Lower leg skin (tissue), 4 donors: ENCODE measurements at regions of chr4 and their contacts with region 1.

Region 1: DNA sequence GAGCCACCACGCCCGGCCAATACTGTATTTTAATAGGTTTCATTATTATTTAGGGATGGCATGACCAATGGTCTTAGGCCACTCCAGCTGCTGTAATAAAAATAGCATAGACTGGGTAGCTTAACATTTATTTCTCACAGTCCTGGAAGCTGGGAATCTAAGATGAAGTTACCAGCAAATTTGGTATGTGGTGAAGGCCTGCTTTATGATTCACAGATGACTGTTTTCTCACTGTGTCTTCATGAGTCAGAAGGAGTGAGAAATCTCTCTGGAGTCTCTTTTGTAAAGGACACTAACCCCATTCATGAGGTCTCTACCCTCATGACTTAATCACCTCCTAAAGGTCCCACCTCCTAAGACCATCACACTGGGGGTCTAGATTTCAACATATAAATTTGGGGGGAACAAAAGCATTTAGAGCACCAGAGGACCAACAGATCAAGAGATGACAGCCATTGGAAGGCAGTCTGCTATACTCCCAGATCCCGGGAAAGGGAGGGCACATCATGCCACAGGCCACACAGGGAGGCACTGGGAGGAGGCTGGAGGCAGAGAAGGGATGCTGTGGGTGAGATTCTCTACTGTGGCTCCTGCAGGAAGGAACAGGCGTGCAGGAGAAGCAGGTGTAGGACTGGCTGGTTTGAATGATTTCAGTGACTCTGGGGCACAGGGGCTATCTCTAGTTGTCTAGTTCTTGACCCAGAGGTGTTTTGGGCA is 335.8 kb upstream of the SFRP2 start:
- DNase-seq: no peak
- H3K4me3 ChIP-seq: no peak overlapping the region
- CTCF ChIP-seq: no peak
- POLR2A ChIP-seq: no peak

Region 2: DNA sequence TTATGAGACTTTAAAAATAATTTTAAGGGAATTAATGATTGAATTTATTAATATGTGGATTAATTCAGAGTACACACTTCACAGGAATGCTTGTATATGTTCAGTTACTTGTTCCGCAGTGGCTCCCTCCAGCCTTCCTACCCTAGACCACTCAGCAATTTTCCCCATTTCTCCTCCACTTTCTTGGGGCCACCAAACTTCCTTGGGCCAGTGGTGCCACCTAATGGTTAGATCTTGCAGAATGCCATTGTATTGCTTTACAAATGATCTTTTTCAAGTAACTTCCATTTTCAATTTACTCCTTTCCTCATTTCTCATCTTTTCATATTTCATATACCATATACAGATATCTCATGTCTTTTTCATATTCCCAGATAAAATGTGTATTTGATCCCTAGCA is 361.3 kb before region 1 on chr4:
- intact Hi-C with region 1: no loop called
- DNase-seq: no peak
- H3K4me3 ChIP-seq: no peak overlapping the region
- CTCF ChIP-seq: no peak
- POLR2A ChIP-seq: no peak

Region 3: DNA sequence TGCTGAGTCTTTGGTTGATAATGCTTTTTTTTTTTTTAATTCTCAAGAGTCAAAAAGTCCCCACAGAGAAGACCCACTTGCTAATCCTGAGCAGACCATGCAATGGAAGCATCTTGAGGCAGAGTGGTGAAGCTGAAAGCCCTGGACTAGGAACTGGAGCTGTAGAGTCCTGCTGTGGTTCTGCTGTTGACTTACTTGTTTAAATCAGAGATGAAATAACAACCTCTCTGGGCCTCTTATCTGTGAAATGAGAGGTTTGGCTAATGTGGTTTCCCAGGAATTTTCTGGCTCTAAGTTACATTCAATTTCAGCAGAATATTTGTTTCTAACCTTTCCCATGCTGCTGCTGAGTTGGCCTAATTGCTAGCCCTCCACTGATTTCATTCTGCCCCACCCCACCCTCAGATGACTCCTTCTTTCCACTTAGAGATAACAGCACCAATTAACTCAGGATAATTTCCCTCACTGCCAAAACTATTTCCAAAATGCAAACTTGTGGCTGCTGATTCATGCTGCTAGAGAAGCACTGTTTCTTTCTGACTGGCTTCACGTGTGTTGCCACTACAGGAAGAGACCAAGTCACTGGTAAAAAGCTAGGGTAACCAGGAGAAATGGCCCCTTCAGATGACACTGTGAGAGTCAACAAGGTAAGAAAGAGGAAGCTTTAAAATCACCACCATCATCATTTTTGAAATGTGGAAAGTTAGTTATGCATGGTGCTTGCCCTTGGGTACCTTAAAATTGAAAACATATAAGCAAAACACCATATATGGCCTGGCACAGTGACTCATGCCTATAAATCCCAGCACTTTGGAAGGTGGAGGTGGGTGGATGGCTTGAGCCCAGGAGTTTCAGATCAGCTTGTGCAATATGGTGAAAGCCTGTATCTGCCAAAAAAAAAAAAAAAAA is 40.5 kb after region 1 on chr4:
- intact Hi-C with region 1: loop called (anchors 5 kb)
- DNase-seq: peak in 1 of 2 donors; percentile 23
- H3K4me3 ChIP-seq: no peak overlapping the region
- CTCF ChIP-seq: no peak
- POLR2A ChIP-seq: no peak